Breast epithelium (tissue), 4 donors: ENCODE measurements at regions of chr6 and their contacts with region 1.

Region 1: DNA sequence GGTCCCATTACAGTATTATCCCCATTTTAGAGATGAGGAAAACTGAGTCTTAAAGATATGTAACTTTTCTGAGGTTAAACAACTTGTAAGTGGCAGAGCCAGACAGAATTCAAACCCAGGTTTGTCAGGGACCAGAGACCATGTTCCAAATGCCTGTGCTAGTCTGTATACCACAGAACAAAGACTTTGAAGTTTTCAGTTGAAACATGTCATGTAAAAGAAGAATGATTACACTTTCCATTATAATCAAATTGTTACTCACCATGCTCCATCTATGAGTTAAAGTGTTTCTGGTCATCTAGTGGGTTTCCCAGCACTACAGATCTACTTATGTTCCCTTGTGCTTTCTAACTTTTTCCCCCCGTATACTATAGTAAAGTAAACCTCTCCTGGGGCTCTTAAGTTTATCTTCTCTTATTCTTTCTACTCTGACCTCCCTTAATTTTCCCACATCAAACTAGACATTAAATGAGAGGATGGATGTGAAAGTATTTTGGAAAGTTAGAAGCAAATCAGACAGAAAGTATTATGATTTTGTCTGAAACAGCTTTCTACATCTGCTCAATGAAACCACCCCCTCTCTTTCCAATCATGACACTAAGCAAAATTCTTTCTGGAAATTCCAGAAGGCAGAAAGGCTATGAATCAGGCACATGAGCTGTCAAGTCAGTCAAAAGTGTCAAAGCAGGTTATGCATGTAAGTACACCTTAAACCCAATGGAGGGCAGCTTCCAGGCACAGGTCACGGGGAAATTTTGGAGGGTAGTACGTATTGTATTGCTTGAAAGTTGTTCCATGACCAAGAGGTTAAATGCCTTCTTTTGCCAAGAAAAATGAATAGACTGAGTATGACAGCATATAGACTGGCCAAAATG is 132.7 kb upstream of the MAP3K7 start:
- DNase-seq: no peak
- H3K4me3 ChIP-seq: no peak overlapping the region
- H3K27ac ChIP-seq: no peak overlapping the region
- H3K4me1 ChIP-seq: no peaks in the 10 kb centered on the region
- H3K27me3 ChIP-seq: no peaks in the 10 kb centered on the region
- CTCF ChIP-seq: no peak
- POLR2A ChIP-seq: no peak

Region 2: DNA sequence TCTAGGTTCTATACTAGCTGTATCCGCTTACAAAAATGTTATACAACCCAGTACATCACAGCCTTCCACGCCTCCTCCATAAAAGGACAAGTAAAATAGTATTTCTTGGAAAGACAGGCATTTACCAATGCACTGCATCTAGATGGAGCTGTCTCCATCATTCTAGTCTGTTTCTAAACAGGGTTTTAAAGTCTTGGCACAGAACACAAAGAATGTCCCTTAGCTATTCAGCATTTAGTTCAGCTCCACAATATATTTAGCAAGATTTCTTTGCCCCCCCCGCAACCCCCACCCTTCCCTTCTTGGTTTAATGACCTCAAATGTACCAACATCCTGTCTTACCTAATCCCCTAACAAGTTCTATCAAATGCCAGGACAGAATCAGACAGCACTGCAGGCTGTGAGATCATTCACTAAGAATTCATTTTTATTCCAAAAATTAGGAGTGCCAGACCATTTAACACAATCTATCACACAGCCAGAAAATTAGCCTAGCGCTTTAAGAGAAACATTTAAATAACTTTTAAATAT is 621.5 kb before region 1 on chr6:
- intact Hi-C with region 1: no loop called
- DNase-seq: peak; percentile 56 to 93
- H3K4me3 ChIP-seq: no peak overlapping the region
- H3K27ac ChIP-seq: peak overlapping the region; percentile 88
- H3K4me1 ChIP-seq: no peaks in the 10 kb centered on the region
- H3K27me3 ChIP-seq: no peaks in the 10 kb centered on the region
- CTCF ChIP-seq: peak in 2 of 3 donors; percentile 16 to 28
- POLR2A ChIP-seq: no peak

Region 3: GRCh38 chr6:91185072-91185471 is 465.5 kb after region 1 on chr6:
- intact Hi-C with region 1: loop called (anchors 5 kb)
- DNase-seq: no peak
- H3K4me3 ChIP-seq: no peak overlapping the region
- H3K27ac ChIP-seq: no peak overlapping the region
- H3K4me1 ChIP-seq: no peaks in the 10 kb centered on the region
- H3K27me3 ChIP-seq: no peaks in the 10 kb centered on the region
- CTCF ChIP-seq: no peak
- POLR2A ChIP-seq: no peak